Dorsolateral prefrontal cortex (tissue), 120 donors: ENCODE measurements at regions of chr14 and their contacts with region 1.

Region 1: GRCh38 chr14:105045710-105046326 is 19.4 kb downstream of the GPR132 start:
- DNase-seq: peak in 9 of 10 donors; percentile 53 to 86 (median 69)
- H3K4me3 ChIP-seq: peak overlapping the region in 3 of 59 donors; percentile 9 to 34 (median 14)
- H3K27ac ChIP-seq: no peak overlapping the region
- H3K27me3 ChIP-seq: peaks cover 0 to 61% (median 26%) of the 10 kb centered on the region in 45 donors
- CTCF ChIP-seq: peak; percentile 80 to 100 (median 97)

Region 2: GRCh38 chr14:104976198-104977007 is 69.4 kb before region 1 on chr14:
- intact Hi-C with region 1: loop called (anchors 2 to 10 kb)
- DNase-seq: peak; percentile 46 to 81 (median 68)
- H3K4me3 ChIP-seq: peak overlapping the region in 22 of 59 donors; percentile 51 to 82 (median 66)
- H3K27ac ChIP-seq: no peak overlapping the region
- H3K27me3 ChIP-seq: peaks cover 0 to 4% (median 0%) of the 10 kb centered on the region in 45 donors
- CTCF ChIP-seq: peak; percentile 50 to 92 (median 84)